ENCODE measurements at regions of chr11 and their contacts with region 1.

Region 1: GRCh38 chr11:78168539-78169477 is 19.6 kb downstream of the KCTD21 start:
- DNase-seq: peak; percentile 91
- H3K4me3 ChIP-seq: no peak overlapping the region
- H3K27ac ChIP-seq: peak overlapping the region; percentile 71 to 79 (median 76)
- H3K4me1 ChIP-seq: peaks cover 0 to 56% (median 49%) of the 10 kb centered on the region in 4 donors
- H3K27me3 ChIP-seq: no peaks in the 10 kb centered on the region
- CTCF ChIP-seq: no peak
- EP300 ChIP-seq: no peak
- POLR2A ChIP-seq: no peak

Region 2: GRCh38 chr11:78310500-78310909 is 141.7 kb after region 1 on chr11:
- intact Hi-C with region 1: loop called (anchors 10 kb)
- DNase-seq: peak; percentile 69
- H3K4me3 ChIP-seq: no peak overlapping the region
- H3K27ac ChIP-seq: peak overlapping the region in 3 of 4 donors; percentile 41 to 53 (median 44)
- H3K4me1 ChIP-seq: peaks cover 0 to 29% (median 17%) of the 10 kb centered on the region in 4 donors
- H3K27me3 ChIP-seq: no peaks in the 10 kb centered on the region
- CTCF ChIP-seq: no peak
- EP300 ChIP-seq: no peak
- POLR2A ChIP-seq: no peak

Measured in sigmoid colon (tissue), 7 donors.